ENCODE measurements at regions of chr3 and their contacts with region 1.

Region 1: GRCh38 chr3:181700168-181701087 is 11.3 kb upstream of the SOX2 start:
- DNase-seq: peak; percentile 46 to 73 (median 60)
- H3K4me3 ChIP-seq: peak overlapping the region; percentile 3
- H3K27ac ChIP-seq: no peak overlapping the region
- H3K4me1 ChIP-seq: peaks cover 9% of the 10 kb centered on the region
- H3K27me3 ChIP-seq: peaks cover 4% of the 10 kb centered on the region
- CTCF ChIP-seq: peak; percentile 16 to 70 (median 28)
- EP300 ChIP-seq: no peak
- POLR2A ChIP-seq: no peak

Region 2: GRCh38 chr3:182683453-182683852 is 983.0 kb after region 1 on chr3:
- intact Hi-C with region 1: loop called in 1 of 4 experiments (anchors 10 kb)
- DNase-seq: peak; percentile 29 to 59 (median 50)
- H3K4me3 ChIP-seq: peak overlapping the region; percentile 47
- H3K27ac ChIP-seq: no peak overlapping the region
- H3K4me1 ChIP-seq: peaks cover 5% of the 10 kb centered on the region
- H3K27me3 ChIP-seq: no peaks in the 10 kb centered on the region
- CTCF ChIP-seq: peak; percentile 47 to 66 (median 61)
- EP300 ChIP-seq: no peak
- POLR2A ChIP-seq: no peak

Measured in ovary (tissue), 10 donors.